ENCODE measurements at regions of chr5 and their contacts with region 1.

Region 1: DNA sequence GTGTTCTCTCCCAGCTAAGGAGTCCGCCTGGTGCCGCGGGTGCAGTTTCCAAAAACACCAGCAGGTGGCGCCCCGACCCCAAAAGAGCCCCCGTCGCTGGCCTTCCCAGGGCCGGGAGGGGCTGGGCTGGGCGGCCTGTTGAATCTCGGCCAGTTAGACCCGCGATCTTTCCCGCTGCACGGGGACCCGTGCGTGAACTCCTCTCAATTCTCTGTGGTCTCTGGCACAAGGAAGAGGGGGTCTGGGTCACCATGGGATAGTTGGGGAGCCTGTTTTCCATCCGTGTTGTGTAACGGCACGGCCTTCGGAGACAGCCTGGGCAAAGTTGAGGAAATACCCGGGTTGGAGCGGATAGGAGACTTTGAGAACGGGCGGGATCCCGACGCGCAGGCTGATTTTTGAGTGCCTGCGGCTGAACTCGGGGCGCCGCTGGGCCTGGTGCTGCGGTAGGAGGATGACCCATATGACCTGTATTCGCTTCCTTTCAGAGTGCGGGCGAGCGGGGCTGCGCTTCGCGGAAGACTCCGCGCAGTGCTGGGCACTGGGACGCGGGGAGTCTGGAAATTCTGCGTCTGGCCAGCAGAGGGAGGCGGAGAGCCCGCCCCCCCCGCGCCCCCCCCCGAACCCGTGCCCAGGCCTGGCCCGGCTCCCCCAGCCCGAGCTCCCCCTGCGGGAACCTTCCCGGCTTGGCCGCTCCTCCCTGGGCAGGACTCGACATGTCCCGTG is 7.9 kb upstream of the PSD2 start:
- DNase-seq: peak; percentile 86
- H3K4me3 Mint-ChIP-seq: peak overlapping the region; percentile 78
- H3K27ac Mint-ChIP-seq: peak overlapping the region; percentile 47
- H3K4me1 Mint-ChIP-seq: no peaks in the 10 kb centered on the region
- H3K27me3 Mint-ChIP-seq: peaks cover 38% of the 10 kb centered on the region
- CTCF ChIP-seq: peak; percentile 100

Region 2: GRCh38 chr5:139774980-139775661 is 12.6 kb before region 1 on chr5:
- CTCF ChIA-PET with region 1: interaction called, 86 read pairs
- POLR2A ChIA-PET with region 1: interaction called, 3 read pairs
- intact Hi-C with region 1: no loop called
- DNase-seq: peak; percentile 67
- H3K4me3 Mint-ChIP-seq: no peak overlapping the region
- H3K27ac Mint-ChIP-seq: no peak overlapping the region
- H3K4me1 Mint-ChIP-seq: no peaks in the 10 kb centered on the region
- H3K27me3 Mint-ChIP-seq: peaks cover 54% of the 10 kb centered on the region
- CTCF ChIP-seq: peak; percentile 98

Region 3: GRCh38 chr5:139822553-139823425 is 35.1 kb after region 1 on chr5:
- CTCF ChIA-PET with region 1: no interaction called
- POLR2A ChIA-PET with region 1: no interaction called
- intact Hi-C with region 1: no loop called
- DNase-seq: no peak
- H3K4me3 Mint-ChIP-seq: no peak overlapping the region
- H3K27ac Mint-ChIP-seq: no peak overlapping the region
- H3K4me1 Mint-ChIP-seq: no peaks in the 10 kb centered on the region
- H3K27me3 Mint-ChIP-seq: peaks cover 69% of the 10 kb centered on the region
- CTCF ChIP-seq: no peak

Region 4: DNA sequence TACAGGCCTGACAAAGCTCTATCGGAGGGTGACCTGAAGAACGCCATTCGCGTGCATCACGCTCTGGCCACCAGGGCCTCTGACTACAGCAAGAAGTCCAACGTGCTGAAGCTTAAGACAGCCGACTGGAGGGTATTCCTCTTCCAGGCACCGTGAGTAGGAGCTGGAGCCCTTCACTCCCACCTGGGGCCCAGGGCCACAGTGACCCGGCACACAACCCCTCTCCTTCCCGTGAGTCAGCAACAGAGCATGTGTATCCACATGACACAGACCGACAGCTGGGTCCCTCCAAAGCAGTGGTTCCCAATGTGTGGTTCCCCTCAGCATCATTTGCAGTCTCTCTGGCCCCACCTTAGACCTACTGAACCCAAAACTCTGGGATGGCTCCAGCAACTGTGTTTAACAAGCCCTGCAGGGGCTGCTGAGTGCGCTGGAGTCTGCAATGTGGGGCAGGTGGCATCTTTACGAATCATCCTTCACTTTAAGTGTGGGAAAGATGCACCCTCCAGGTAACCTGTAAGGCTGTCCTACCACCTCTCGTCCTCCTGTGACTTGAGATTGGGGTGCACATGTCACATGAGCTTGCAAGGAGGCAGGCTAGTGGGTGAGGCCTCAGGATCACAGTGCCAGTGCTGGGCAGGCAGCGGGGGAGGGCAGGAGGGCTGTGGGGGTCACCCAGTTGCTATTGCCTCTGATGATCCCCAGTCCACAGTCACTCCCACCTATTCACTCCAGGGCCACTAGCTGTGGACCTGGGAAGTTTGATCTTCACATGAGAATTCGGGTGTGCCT is 50.1 kb after region 1 on chr5:
- CTCF ChIA-PET with region 1: interaction called, 87 read pairs
- POLR2A ChIA-PET with region 1: interaction called, 3 read pairs
- intact Hi-C with region 1: no loop called
- DNase-seq: no peak
- H3K4me3 Mint-ChIP-seq: no peak overlapping the region
- H3K27ac Mint-ChIP-seq: no peak overlapping the region
- H3K4me1 Mint-ChIP-seq: no peaks in the 10 kb centered on the region
- H3K27me3 Mint-ChIP-seq: peaks cover 51% of the 10 kb centered on the region
- CTCF ChIP-seq: no peak

Region 5: GRCh38 chr5:139856714-139857113 is 69.0 kb after region 1 on chr5:
- CTCF ChIA-PET with region 1: interaction called, 292 read pairs
- POLR2A ChIA-PET with region 1: interaction called, 7 read pairs
- intact Hi-C with region 1: no loop called
- DNase-seq: no peak
- H3K4me3 Mint-ChIP-seq: no peak overlapping the region
- H3K27ac Mint-ChIP-seq: no peak overlapping the region
- H3K4me1 Mint-ChIP-seq: no peaks in the 10 kb centered on the region
- H3K27me3 Mint-ChIP-seq: no peaks in the 10 kb centered on the region
- CTCF ChIP-seq: no peak

Region 6: DNA sequence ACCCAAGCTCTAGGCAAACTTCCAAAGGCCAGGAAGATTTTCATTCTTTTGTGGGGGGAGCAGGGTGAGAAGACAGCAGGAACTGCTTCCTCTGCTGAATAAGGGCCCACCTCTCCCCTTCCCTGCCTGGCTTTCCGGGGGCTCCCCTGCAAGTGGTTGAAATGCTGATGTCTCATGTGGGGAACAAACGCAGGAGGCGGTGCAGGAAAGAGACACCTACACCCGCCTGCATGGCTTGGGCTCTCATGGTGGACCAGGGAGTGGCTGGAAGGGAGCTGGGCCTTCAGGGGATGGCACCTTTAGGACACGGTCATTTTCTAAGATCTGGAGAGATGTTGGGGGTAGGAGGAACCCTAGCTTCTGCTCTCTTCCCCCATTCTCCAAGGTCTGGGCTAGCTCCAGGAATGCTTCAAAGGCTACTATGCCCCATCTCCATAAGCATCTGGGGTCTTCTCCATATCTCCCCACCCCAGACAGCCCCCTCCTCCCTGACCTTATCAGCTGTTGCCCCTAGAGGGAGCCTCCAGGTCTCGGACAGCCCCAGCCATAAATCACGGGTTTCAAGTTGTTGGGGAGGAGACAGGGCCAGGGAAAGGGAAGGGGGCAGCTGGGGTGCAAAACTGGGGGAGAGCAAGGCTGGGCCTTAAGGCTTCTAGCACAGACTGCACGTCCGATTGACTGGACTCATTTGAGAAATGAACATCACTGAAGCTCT is 84.5 kb after region 1 on chr5:
- CTCF ChIA-PET with region 1: interaction called, 292 read pairs
- POLR2A ChIA-PET with region 1: no interaction called
- intact Hi-C with region 1: no loop called
- DNase-seq: no peak
- H3K4me3 Mint-ChIP-seq: no peak overlapping the region
- H3K27ac Mint-ChIP-seq: no peak overlapping the region
- H3K4me1 Mint-ChIP-seq: peaks cover 4% of the 10 kb centered on the region
- H3K27me3 Mint-ChIP-seq: peaks cover 1% of the 10 kb centered on the region
- CTCF ChIP-seq: no peak

Region 7: GRCh38 chr5:139960723-139961383 is 173.1 kb after region 1 on chr5:
- CTCF ChIA-PET with region 1: interaction called, 774 read pairs
- POLR2A ChIA-PET with region 1: interaction called, 44 read pairs
- intact Hi-C with region 1: no loop called
- DNase-seq: no peak
- H3K4me3 Mint-ChIP-seq: no peak overlapping the region
- H3K27ac Mint-ChIP-seq: no peak overlapping the region
- H3K4me1 Mint-ChIP-seq: no peaks in the 10 kb centered on the region
- H3K27me3 Mint-ChIP-seq: peaks cover 12% of the 10 kb centered on the region
- CTCF ChIP-seq: no peak

Region 8: GRCh38 chr5:140157032-140157803 is 369.5 kb after region 1 on chr5:
- CTCF ChIA-PET with region 1: interaction called, 12 read pairs
- POLR2A ChIA-PET with region 1: interaction called, 3 read pairs
- intact Hi-C with region 1: loop called (anchors 1 kb)
- DNase-seq: peak; percentile 93
- H3K4me3 Mint-ChIP-seq: peak overlapping the region; percentile 62
- H3K27ac Mint-ChIP-seq: peak overlapping the region; percentile 9
- H3K4me1 Mint-ChIP-seq: peaks cover 9% of the 10 kb centered on the region
- H3K27me3 Mint-ChIP-seq: no peaks in the 10 kb centered on the region
- CTCF ChIP-seq: peak; percentile 97